Activated CD8-positive, alpha-beta T cell treated with anti-CD3 and anti-CD28 coated beads for 36 hours (primary cell): ENCODE measurements at regions of chr2 and their contacts with region 1.

Region 1: DNA sequence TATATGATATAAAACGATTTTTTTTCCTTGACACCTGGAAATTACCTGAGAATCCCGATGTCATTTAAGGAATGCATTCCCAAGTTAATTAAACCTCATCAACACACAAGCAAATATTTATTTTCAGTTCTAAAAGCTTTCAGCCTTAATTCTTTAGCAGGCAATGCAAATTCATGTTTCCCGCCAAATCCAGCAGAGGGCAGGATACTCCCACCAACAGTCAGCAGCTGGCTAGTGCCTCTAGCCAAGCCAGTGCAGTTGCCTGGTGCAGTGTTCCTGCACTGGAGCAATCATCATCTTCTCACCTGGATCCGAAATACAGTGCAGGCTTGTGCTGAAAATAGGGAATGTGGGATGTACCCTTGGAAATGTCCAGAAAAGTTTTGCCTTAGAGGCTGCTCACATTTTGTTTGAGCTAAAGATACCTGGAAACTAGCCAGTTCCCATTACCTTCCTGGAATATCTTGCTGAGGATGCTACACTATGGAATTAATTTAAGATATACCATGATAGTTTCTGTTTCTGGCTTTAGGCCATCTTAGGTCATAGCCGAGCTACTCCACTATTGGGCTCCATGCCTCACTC is 48.4 kb upstream of the CYTIP start:
- DNase-seq: peak; percentile 85
- ATAC-seq: peak; percentile 86
- H3K4me3 Mint-ChIP-seq: no peak overlapping the region
- H3K27ac Mint-ChIP-seq: no peak overlapping the region
- H3K4me1 Mint-ChIP-seq: peaks cover 65% of the 10 kb centered on the region
- H3K27me3 Mint-ChIP-seq: no peaks in the 10 kb centered on the region
- CTCF ChIP-seq: peak; percentile 82

Region 2: DNA sequence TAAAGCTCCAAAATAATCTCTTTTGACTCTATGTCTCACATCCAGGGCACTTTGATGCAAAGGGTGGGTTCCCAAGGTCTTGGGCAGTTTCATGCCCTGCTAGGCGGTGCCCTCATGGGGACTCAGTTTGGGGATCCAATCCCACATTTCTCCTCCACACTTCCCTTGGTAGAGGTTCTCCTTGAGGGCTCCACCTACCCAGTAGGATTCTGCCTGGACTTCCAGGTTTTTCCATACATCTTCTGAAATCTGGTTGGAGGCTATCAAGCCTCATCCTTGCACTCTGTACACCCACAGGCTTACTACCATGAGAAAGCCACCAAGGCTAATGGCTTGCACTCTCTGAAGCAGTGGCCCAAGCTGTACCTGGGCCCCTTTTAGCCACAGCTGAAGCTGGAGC is 116.9 kb before region 1 on chr2:
- CTCF ChIA-PET with region 1: no interaction called
- POLR2A ChIA-PET with region 1: no interaction called
- intact Hi-C with region 1: no loop called
- DNase-seq: no peak
- ATAC-seq: no peak
- H3K4me3 Mint-ChIP-seq: no peak overlapping the region
- H3K27ac Mint-ChIP-seq: no peak overlapping the region
- H3K4me1 Mint-ChIP-seq: peaks cover 7% of the 10 kb centered on the region
- H3K27me3 Mint-ChIP-seq: no peaks in the 10 kb centered on the region
- CTCF ChIP-seq: no peak

Region 3: DNA sequence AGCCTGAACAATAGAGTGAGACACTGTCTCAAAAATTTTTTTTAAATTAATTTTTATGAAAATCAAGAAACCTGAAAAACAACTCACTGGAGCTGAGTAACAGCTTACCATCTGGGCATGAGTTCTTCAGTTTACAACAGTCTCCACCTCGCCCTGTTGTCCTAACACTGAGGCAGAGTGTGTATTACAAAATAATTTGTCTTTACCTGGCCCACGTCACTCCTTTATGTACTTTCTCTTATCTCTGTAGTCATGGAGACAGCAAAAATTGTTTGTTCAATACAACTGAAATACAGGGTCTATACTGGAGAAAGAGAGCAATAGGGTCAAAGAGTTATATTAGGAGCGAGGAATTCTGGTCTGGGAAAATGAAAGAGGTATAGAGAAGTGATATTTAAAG is 96.5 kb before region 1 on chr2:
- CTCF ChIA-PET with region 1: no interaction called
- POLR2A ChIA-PET with region 1: no interaction called
- intact Hi-C with region 1: no loop called
- DNase-seq: no peak
- ATAC-seq: peak; percentile 13
- H3K4me3 Mint-ChIP-seq: no peak overlapping the region
- H3K27ac Mint-ChIP-seq: no peak overlapping the region
- H3K4me1 Mint-ChIP-seq: peaks cover 9% of the 10 kb centered on the region
- H3K27me3 Mint-ChIP-seq: no peaks in the 10 kb centered on the region
- CTCF ChIP-seq: no peak

Region 4: GRCh38 chr2:157433394-157433793 is 58.9 kb before region 1 on chr2:
- CTCF ChIA-PET with region 1: interaction called, 12 read pairs
- POLR2A ChIA-PET with region 1: interaction called, 1,592 read pairs
- intact Hi-C with region 1: no loop called
- DNase-seq: no peak
- ATAC-seq: no peak
- H3K4me3 Mint-ChIP-seq: peak overlapping the region; percentile 90
- H3K27ac Mint-ChIP-seq: peak overlapping the region; percentile 94
- H3K4me1 Mint-ChIP-seq: peaks cover 51% of the 10 kb centered on the region
- H3K27me3 Mint-ChIP-seq: no peaks in the 10 kb centered on the region
- CTCF ChIP-seq: no peak

Region 5: DNA sequence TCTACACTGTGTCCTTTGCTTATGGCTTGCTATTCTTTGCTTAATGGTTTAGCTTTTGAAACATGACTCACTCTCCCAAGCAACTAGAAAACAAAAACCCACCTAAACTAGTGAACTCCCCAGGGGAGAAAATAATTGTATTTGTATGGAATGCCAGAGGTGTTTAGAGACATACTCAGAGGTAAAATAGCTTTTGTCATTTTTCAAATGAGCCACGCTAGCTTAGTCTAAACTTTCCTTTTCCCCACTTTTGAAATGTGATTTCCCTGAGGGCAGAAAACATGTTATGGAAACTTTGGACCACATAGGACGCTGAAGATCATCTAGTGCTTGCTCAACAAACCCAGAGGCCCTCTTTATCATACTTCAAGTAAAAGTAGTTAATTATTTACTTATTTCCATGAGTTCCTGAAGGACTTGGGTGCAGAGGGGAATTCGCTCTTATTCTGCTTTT is 31.9 kb before region 1 on chr2:
- CTCF ChIA-PET with region 1: interaction called, 11 read pairs
- POLR2A ChIA-PET with region 1: interaction called, 3 read pairs
- intact Hi-C with region 1: no loop called
- DNase-seq: no peak
- ATAC-seq: no peak
- H3K4me3 Mint-ChIP-seq: no peak overlapping the region
- H3K27ac Mint-ChIP-seq: peak overlapping the region; percentile 35
- H3K4me1 Mint-ChIP-seq: peaks cover 86% of the 10 kb centered on the region
- H3K27me3 Mint-ChIP-seq: no peaks in the 10 kb centered on the region
- CTCF ChIP-seq: no peak

Region 6: DNA sequence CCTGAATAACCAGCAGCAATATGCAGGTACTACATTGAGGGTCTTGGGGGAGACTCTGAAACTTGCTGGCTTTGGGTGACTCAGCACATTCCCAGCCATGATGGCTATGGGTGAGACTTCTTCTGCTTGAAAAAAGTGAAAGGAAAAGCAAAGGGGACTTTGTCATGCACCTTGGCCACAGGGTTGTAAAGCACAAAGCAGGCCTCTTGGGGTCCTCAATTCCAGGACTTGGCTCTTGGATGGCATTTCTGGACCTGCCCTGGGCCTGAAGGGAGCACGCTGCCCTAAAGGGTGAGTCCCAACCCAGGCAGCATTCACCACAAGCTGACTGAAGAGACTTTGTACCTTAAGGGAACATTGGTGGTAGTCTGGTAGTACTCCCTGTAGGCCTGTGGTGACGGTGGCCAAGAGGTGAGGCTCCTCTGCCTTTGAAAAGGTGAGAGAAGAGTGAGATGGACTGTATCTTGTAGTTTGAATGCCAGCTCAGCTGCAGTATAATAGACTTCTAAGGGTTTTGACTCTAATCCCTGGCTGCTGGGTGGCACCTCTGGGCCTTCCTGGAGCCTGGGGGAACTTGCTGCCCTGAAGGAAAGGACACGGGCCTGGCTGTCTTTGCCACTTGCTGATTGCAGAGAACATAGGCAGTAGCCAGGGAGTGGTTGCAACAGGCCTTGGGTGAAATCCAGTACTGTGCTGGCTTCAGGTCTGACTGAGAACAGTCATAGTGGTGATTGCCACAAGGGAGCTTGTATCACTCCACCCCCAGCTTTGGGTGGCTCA is 11.9 kb before region 1 on chr2:
- CTCF ChIA-PET with region 1: interaction called, 46 read pairs
- POLR2A ChIA-PET with region 1: interaction called, 5 read pairs
- intact Hi-C with region 1: no loop called
- DNase-seq: peak; percentile 79
- ATAC-seq: peak; percentile 66
- H3K4me3 Mint-ChIP-seq: peak overlapping the region; percentile 80
- H3K27ac Mint-ChIP-seq: peak overlapping the region; percentile 98
- H3K4me1 Mint-ChIP-seq: peaks cover 82% of the 10 kb centered on the region
- H3K27me3 Mint-ChIP-seq: no peaks in the 10 kb centered on the region
- CTCF ChIP-seq: no peak

Region 7: GRCh38 chr2:157628477-157629415 is 136.5 kb after region 1 on chr2 and contains the start of gene ACVR1C:
- CTCF ChIA-PET with region 1: interaction called, 33 read pairs
- POLR2A ChIA-PET with region 1: no interaction called
- intact Hi-C with region 1: loop called (anchors 10 kb)
- DNase-seq: peak; percentile 72
- ATAC-seq: peak; percentile 87
- H3K4me3 Mint-ChIP-seq: peak within 1 kb of the TSS; percentile 79
- H3K27ac Mint-ChIP-seq: peak within 1 kb of the TSS; percentile 45
- H3K4me1 Mint-ChIP-seq: peaks cover 31% of the 10 kb centered on the region
- H3K27me3 Mint-ChIP-seq: peaks cover 6% of the 10 kb centered on the region
- CTCF ChIP-seq: peak; percentile 53
- total RNA-seq, gene ACVR1C: 1.7 to 2.2 TPM

Region 8: GRCh38 chr2:158006961-158007719 is 514.9 kb after region 1 on chr2:
- CTCF ChIA-PET with region 1: interaction called, 9 read pairs
- POLR2A ChIA-PET with region 1: no interaction called
- intact Hi-C with region 1: loop called (anchors 5 kb)
- DNase-seq: peak; percentile 31
- ATAC-seq: peak; percentile 65
- H3K4me3 Mint-ChIP-seq: no peak overlapping the region
- H3K27ac Mint-ChIP-seq: no peak overlapping the region
- H3K4me1 Mint-ChIP-seq: peaks cover 4% of the 10 kb centered on the region
- H3K27me3 Mint-ChIP-seq: peaks cover 2% of the 10 kb centered on the region
- CTCF ChIP-seq: no peak